ENCODE measurements at regions of chr15 and their contacts with region 1.

Region 1: GRCh38 chr15:74382004-74382816 is 14.8 kb upstream of the CYP11A1 start:
- DNase-seq: peak; percentile 80 to 87
- ATAC-seq: peak; percentile 75 to 91 (median 80)
- H3K4me3 ChIP-seq: no peak overlapping the region
- H3K4me3 Mint-ChIP-seq: no peak overlapping the region
- H3K27ac ChIP-seq: no peak overlapping the region
- H3K27ac Mint-ChIP-seq: no peak overlapping the region
- H3K4me1 ChIP-seq: peaks cover 47% of the 10 kb centered on the region
- H3K4me1 Mint-ChIP-seq: peaks cover 11 to 16% of the 10 kb centered on the region in 2 donors
- H3K27me3 ChIP-seq: no peaks in the 10 kb centered on the region
- H3K27me3 Mint-ChIP-seq: no peaks in the 10 kb centered on the region
- CTCF ChIP-seq: peak; percentile 96

Region 2: DNA sequence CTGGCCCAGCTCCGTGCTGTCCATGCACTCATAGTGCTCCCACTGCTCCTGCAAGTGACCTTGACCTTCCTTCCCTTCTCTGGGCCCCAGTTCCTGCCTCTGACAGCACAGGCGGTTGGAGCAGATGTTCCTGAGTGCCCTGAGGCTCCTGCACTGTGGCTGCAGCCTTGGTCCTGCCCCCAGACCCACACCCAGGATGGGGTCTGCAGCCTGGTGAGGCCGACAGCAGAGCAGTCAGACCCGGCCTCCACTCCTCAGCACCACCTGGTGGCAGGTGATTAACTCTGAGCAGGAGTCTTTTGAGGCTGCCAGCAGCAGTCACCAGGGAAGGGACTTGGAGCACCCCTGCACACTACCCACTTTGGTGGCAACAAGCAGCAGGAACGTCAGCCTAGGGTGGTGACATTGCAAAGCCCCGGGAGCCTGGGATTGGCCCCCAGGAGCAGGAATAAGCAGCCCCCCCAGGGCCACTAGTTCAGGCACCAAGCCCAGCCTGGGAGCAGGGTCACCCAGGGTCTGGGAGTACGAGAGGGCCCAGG is 79.3 kb before region 1 on chr15:
- intact Hi-C with region 1: no loop called
- DNase-seq: peak in 1 of 2 donors; percentile 52
- ATAC-seq: no peak
- H3K4me3 ChIP-seq: no peak overlapping the region
- H3K4me3 Mint-ChIP-seq: no peak overlapping the region
- H3K27ac ChIP-seq: no peak overlapping the region
- H3K27ac Mint-ChIP-seq: no peak overlapping the region
- H3K4me1 ChIP-seq: no peaks in the 10 kb centered on the region
- H3K4me1 Mint-ChIP-seq: peaks cover 0 to 4% of the 10 kb centered on the region in 2 donors
- H3K27me3 ChIP-seq: no peaks in the 10 kb centered on the region
- H3K27me3 Mint-ChIP-seq: peaks cover 44 to 51% of the 10 kb centered on the region in 2 donors
- CTCF ChIP-seq: peak; percentile 14

Region 3: GRCh38 chr15:74417246-74417645 is 35.0 kb after region 1 on chr15:
- intact Hi-C with region 1: no loop called
- DNase-seq: no peak
- ATAC-seq: no peak
- H3K4me3 ChIP-seq: no peak overlapping the region
- H3K4me3 Mint-ChIP-seq: no peak overlapping the region
- H3K27ac ChIP-seq: no peak overlapping the region
- H3K27ac Mint-ChIP-seq: no peak overlapping the region
- H3K4me1 ChIP-seq: peaks cover 52% of the 10 kb centered on the region
- H3K4me1 Mint-ChIP-seq: peaks cover 14 to 36% of the 10 kb centered on the region in 2 donors
- H3K27me3 ChIP-seq: no peaks in the 10 kb centered on the region
- H3K27me3 Mint-ChIP-seq: no peaks in the 10 kb centered on the region
- CTCF ChIP-seq: no peak

Region 4: DNA sequence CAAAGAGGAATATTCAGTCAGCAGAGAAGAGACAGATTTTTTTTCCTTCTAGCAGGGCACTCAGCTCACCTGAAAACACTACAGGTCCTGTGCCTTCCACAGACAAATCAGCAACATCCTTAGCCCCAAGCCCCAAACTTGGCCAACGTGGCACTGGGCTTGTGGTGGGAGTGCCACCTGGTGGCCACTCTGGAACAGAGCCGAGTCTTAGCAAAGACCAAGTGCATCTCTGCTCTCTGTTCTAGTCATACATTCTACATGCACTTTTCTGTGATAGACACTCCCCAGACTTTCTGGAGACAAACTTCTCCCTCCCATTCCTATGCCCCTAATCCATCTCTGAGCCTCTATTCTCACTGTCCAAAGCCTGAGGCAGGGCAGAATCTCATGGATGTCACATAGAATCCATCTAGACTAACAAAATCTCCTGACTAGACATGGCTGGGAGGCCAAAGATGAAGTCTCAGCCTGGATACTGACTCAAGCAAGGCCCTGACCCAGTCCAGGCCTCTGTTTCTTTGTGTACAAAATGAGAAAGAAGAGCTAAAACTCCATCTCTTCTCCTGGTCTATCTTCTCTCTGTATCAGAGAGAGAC is 56.6 kb after region 1 on chr15:
- intact Hi-C with region 1: loop called (anchors 1 kb)
- DNase-seq: peak; percentile 66 to 89
- ATAC-seq: peak; percentile 63 to 76 (median 75)
- H3K4me3 ChIP-seq: no peak overlapping the region
- H3K4me3 Mint-ChIP-seq: no peak overlapping the region
- H3K27ac ChIP-seq: no peak overlapping the region
- H3K27ac Mint-ChIP-seq: no peak overlapping the region
- H3K4me1 ChIP-seq: peaks cover 18% of the 10 kb centered on the region
- H3K4me1 Mint-ChIP-seq: peaks cover 0 to 20% of the 10 kb centered on the region in 2 donors
- H3K27me3 ChIP-seq: no peaks in the 10 kb centered on the region
- H3K27me3 Mint-ChIP-seq: no peaks in the 10 kb centered on the region
- CTCF ChIP-seq: peak; percentile 95

Region 5: DNA sequence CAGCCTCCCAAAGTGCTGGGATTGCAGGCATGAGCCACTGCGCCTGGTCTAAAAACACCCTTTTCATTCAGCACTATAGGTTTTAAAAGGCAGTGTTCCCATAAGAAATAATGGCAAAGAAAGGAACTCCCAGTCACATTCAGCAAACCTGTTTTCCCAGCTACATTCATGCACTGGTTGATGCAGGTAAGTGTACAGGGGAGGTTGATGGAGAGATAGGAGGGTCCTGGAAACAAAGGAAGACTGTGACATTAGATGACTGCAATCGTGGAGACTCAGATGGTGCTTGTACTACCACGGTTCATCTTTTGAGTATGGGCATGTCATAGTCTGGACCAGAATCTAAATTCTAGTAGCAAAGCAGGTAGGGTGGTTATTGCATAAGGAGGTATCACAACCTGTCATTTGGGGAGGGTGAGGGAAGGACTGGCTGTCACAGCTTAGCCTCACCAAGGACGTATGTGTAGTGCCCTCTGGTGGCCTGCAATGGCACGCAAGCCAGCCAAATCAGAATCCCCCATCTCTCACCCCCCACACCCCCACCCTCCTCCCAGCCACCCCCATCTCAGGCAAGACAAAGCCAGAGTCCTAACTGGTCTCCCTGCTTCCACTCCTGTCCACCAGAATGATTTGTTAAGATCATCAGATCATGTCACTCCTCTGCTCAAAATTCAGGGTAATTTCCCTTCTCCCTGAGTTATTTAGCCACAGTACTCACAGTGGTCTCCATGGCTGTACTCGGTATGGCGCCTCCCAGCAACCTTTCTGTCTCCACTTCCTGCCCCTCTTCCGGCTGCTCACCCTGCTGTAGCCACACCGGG is 107.5 kb after region 1 on chr15:
- intact Hi-C with region 1: loop called (anchors 1 kb)
- DNase-seq: peak; percentile 59 to 87
- ATAC-seq: peak; percentile 86 to 94 (median 93)
- H3K4me3 ChIP-seq: no peak overlapping the region
- H3K4me3 Mint-ChIP-seq: peak overlapping the region; percentile 43
- H3K27ac ChIP-seq: peak overlapping the region; percentile 22
- H3K27ac Mint-ChIP-seq: peak overlapping the region; percentile 41 to 78
- H3K4me1 ChIP-seq: peaks cover 20% of the 10 kb centered on the region
- H3K4me1 Mint-ChIP-seq: peaks cover 14% of the 10 kb centered on the region in 2 donors
- H3K27me3 ChIP-seq: no peaks in the 10 kb centered on the region
- H3K27me3 Mint-ChIP-seq: no peaks in the 10 kb centered on the region
- CTCF ChIP-seq: peak; percentile 76

Measured in natural killer cell (primary cell).